ENCODE measurements at regions of chr2 and their contacts with region 1.

Region 1: DNA sequence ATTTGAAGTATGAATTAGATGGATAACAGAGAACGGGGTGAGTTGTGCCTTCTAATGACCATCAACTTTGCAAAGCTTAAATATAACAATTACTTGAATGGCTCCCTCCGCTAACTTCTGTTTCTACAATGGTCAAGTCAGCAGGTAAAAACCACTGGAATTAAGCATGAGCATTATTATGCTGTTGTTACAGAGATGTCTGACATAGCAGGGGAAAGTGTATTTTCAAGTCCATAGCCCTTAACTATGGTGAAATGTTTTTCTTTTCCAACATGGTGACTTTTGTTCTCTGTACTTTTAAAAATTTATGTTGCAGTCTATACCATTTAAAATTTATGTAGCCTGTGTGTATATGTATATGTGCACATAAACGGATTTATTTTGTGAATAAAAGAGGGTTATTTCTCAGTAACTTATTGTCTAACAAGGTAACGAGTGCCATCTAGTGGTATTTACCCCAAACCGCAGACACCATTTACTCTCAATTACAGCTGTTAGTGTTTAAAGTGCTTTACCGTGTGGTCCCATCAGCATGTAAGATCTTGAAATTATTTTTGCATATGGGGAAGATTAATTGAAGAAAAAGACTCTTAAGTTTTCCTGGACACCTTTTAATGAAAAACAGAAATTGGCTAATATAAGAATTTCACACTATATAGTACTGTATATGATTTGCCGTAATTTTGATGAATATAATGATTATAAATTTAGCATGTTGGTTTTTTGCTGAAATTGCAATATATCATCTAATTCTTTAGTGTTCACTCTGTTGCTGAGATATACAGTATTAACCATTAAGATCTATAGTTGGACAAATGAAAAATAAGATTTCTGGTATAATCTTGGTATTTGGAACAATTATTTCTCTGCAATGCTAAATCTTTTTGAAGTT is 78.2 kb downstream of the UBE2E3 start:
- DNase-seq: peak; percentile 12
- ATAC-seq: peak; percentile 75
- H3K4me3 ChIP-seq: no peak overlapping the region
- H3K27ac ChIP-seq: no peak overlapping the region
- H3K4me1 ChIP-seq: no peaks in the 10 kb centered on the region
- H3K27me3 ChIP-seq: no peaks in the 10 kb centered on the region
- CTCF ChIP-seq: peak; percentile 66 to 75 (median 72)
- EP300 ChIP-seq: no peak
- POLR2A ChIP-seq: no peak
- RAD21 ChIP-seq: peak; percentile 91

Region 2: GRCh38 chr2:180240774-180241173 is 817.9 kb before region 1 on chr2:
- CTCF ChIA-PET with region 1: interaction called, 6 read pairs
- POLR2A ChIA-PET with region 1: no interaction called
- RAD21 ChIA-PET with region 1: no interaction called
- SMC1A ChIA-PET with region 1: interaction called, 3 read pairs
- in situ Hi-C with region 1: loop called (anchors 10 kb)
- intact Hi-C with region 1: loop called (anchors 5 kb)
- DNase-seq: no peak
- ATAC-seq: peak; percentile 23; the same call in 1 of the 3 replicates
- H3K4me3 ChIP-seq: no peak overlapping the region
- H3K27ac ChIP-seq: no peak overlapping the region
- H3K4me1 ChIP-seq: no peaks in the 10 kb centered on the region
- H3K27me3 ChIP-seq: no peaks in the 10 kb centered on the region
- CTCF ChIP-seq: peak in 1 of 3 experiments; percentile 15; a peak in 2 of 6 replicates
- EP300 ChIP-seq: no peak
- POLR2A ChIP-seq: no peak
- RAD21 ChIP-seq: peak; percentile 51

Region 3: DNA sequence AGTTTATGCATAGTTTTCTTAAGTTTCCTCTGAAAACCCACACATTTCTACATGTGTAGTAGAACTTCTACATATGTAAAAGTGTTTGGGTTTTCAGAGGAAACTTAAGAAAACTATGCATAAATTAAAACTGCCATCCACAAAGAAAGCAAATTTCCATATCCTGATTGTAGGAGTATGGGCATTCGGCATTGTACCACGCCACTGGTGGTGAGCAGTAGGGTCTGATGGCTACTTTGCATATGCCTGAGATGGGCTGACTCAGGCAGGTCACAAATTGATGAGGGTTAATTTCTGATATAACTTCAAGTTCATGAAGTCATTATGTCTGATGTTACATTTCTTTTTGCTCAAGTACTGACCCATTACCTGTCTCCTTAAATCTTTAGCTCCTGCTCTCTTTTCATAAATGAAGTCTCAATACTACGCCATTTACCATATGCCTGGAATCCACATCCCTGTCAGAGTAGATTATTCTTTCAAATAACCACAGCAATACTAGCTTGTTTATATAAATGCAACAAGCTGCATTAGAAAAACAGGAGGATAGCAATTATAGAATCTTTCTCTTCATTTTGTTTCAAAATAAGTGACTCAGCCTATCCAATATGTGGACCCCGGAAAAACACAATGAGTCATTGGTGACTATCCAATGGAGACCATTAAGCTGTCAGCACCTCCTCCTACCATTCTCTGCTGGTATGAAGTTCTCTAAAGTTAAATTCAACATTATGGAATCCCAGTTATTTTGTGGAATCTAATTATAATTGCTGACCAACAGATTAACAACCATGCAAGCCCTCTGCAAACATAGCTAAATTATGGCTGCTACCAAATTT is 433.4 kb before region 1 on chr2:
- CTCF ChIA-PET with region 1: no interaction called
- POLR2A ChIA-PET with region 1: no interaction called
- RAD21 ChIA-PET with region 1: no interaction called
- SMC1A ChIA-PET with region 1: no interaction called
- in situ Hi-C with region 1: loop called (anchors 25 kb)
- intact Hi-C with region 1: no loop called
- DNase-seq: no peak
- ATAC-seq: no peak
- H3K4me3 ChIP-seq: no peak overlapping the region
- H3K27ac ChIP-seq: no peak overlapping the region
- H3K4me1 ChIP-seq: no peaks in the 10 kb centered on the region
- H3K27me3 ChIP-seq: no peaks in the 10 kb centered on the region
- CTCF ChIP-seq: no peak
- EP300 ChIP-seq: no peak
- POLR2A ChIP-seq: no peak
- RAD21 ChIP-seq: no peak

Region 4: DNA sequence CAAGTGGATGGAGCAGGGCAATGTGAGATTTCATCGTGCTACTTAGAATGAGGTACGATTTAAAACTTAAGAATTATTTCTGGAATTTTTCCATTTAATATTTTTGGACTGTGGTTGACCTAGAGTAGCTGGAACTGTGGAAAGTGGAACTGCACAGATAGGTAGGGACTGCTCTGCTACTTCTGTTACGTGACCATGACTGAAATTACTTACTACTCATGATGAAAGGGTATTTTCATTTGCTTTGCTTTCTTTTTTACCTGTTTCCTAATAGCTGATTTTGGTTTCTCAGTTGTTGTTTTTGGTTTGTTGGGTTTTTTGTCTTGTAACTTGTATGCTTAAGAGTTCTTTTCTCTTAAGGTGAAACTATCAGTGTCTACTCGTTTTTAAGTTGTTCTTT is 66.8 kb before region 1 on chr2:
- CTCF ChIA-PET with region 1: interaction called, 27 read pairs
- POLR2A ChIA-PET with region 1: no interaction called
- RAD21 ChIA-PET with region 1: interaction called, 7 read pairs
- SMC1A ChIA-PET with region 1: interaction called, 14 read pairs
- in situ Hi-C with region 1: no loop called
- intact Hi-C with region 1: no loop called
- DNase-seq: no peak
- ATAC-seq: peak; percentile 82
- H3K4me3 ChIP-seq: no peak overlapping the region
- H3K27ac ChIP-seq: peak overlapping the region; percentile 47
- H3K4me1 ChIP-seq: peaks cover 12% of the 10 kb centered on the region
- H3K27me3 ChIP-seq: no peaks in the 10 kb centered on the region
- CTCF ChIP-seq: no peak
- EP300 ChIP-seq: no peak
- POLR2A ChIP-seq: no peak
- RAD21 ChIP-seq: no peak

Region 5: GRCh38 chr2:181046833-181047232 is 11.8 kb before region 1 on chr2:
- CTCF ChIA-PET with region 1: interaction called, 43 read pairs
- POLR2A ChIA-PET with region 1: no interaction called
- RAD21 ChIA-PET with region 1: interaction called, 4 read pairs
- SMC1A ChIA-PET with region 1: interaction called, 6 read pairs
- in situ Hi-C with region 1: no loop called
- intact Hi-C with region 1: no loop called
- DNase-seq: no peak
- ATAC-seq: peak; percentile 41
- H3K4me3 ChIP-seq: no peak overlapping the region
- H3K27ac ChIP-seq: no peak overlapping the region
- H3K4me1 ChIP-seq: no peaks in the 10 kb centered on the region; the same call in 1 of the 2 replicates
- H3K27me3 ChIP-seq: no peaks in the 10 kb centered on the region
- CTCF ChIP-seq: no peak
- EP300 ChIP-seq: no peak
- POLR2A ChIP-seq: no peak
- RAD21 ChIP-seq: no peak

Measured in GM12878 (cell line).